ENCODE measurements at regions of chr13 and their contacts with region 1.

Region 1: DNA sequence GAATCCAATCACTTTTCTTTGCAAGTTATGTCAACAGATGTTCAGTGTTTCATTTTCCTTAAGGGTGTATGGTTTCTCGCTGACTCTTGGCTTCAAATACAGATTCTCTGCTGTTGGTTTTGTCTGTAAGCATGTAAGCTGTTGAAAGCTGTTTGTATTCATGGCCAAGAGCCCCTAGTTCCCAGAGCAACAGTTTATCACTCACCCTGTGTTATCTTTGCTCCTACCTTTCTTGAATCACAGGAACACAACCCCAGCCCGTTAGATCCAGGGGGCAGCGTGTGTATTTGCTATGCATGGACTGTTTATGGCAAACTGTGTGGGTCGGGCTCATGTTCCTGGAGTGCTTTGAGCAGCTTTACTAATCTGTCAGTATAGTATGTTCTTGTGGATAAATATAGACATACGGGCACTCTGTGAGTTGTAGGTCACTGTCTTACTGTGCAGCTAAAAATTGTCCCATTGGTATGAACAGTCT is 28.9 kb downstream of the FRY start:
- DNase-seq: peak in 3 of 5 donors; percentile 27 to 42 (median 36)
- ATAC-seq: peak; percentile 93 to 96 (median 94)
- H3K4me3 ChIP-seq: peak overlapping the region in 8 of 12 donors; percentile 5 to 51 (median 28)
- H3K27ac ChIP-seq: peak overlapping the region; percentile 35 to 82 (median 76)
- H3K4me1 ChIP-seq: peaks cover 0 to 55% (median 25%) of the 10 kb centered on the region in 12 donors
- H3K27me3 ChIP-seq: no peaks in the 10 kb centered on the region
- CTCF ChIP-seq: no peak
- POLR2A ChIP-seq: no peak

Region 2: DNA sequence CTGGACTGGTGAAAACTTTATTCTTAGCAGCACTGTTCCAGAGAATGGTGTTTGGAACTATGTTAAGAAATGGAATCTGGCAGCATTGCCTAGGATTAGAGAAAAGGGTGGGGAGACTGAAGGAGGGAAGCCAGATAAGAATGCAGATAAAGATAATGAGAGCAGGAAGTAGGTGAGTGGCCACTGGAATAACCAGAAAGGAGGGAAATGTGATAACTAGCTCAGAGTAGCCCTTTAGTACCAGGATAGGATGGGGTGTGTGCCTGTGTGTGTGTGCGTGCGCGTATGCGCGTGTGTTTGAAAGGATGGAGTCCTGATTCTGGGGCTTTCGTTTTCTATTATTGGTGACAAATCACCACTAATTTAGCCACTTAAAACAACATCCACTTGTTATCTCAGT is 62.3 kb before region 1 on chr13:
- intact Hi-C with region 1: no loop called
- DNase-seq: no peak
- ATAC-seq: peak; percentile 7 to 46 (median 24)
- H3K4me3 ChIP-seq: no peak overlapping the region
- H3K27ac ChIP-seq: peak overlapping the region in 3 of 12 donors; percentile 30 to 45 (median 32)
- H3K4me1 ChIP-seq: peaks cover 0 to 30% (median 14%) of the 10 kb centered on the region in 12 donors
- H3K27me3 ChIP-seq: no peaks in the 10 kb centered on the region
- CTCF ChIP-seq: no peak
- POLR2A ChIP-seq: no peak

Region 3: GRCh38 chr13:32079587-32079986 is 19.1 kb after region 1 on chr13:
- intact Hi-C with region 1: loop called in 1 of 10 experiments (anchors 2 kb)
- DNase-seq: no peak
- ATAC-seq: peak in 1 of 4 donors; percentile 35
- H3K4me3 ChIP-seq: no peak overlapping the region
- H3K27ac ChIP-seq: peak overlapping the region in 8 of 12 donors; percentile 8 to 61 (median 32)
- H3K4me1 ChIP-seq: peaks cover 3 to 78% (median 35%) of the 10 kb centered on the region in 12 donors
- H3K27me3 ChIP-seq: no peaks in the 10 kb centered on the region
- CTCF ChIP-seq: no peak
- POLR2A ChIP-seq: no peak

Region 4: GRCh38 chr13:32117701-32118100 is 57.3 kb after region 1 on chr13:
- intact Hi-C with region 1: loop called in 2 of 10 experiments (anchors 5 kb)
- DNase-seq: peak; percentile 62 to 89 (median 73)
- ATAC-seq: peak; percentile 97 to 99 (median 97)
- H3K4me3 ChIP-seq: no peak overlapping the region
- H3K27ac ChIP-seq: peak overlapping the region; percentile 33 to 85 (median 70)
- H3K4me1 ChIP-seq: peaks cover 0 to 64% (median 28%) of the 10 kb centered on the region in 12 donors
- H3K27me3 ChIP-seq: no peaks in the 10 kb centered on the region
- CTCF ChIP-seq: no peak
- POLR2A ChIP-seq: no peak

Region 5: DNA sequence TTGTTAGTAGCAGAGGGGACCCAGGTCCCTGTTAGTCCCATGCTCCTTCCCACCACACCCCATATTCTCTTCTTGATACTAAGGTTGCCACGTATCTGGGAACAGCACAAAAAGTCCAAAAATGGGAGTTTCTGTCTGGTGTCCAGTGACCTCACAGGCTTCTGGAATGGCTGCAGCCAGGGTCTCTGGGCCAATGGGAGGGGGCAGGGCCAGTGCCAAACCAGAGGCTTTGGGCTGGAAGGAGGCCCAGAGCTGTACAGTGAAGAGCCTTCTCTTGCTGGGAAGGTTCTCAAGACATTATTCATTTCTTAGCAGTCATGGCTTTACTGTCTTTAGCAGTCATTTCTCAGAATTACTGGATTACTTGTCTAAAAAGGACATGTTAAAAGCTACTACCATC is 90.4 kb after region 1 on chr13:
- intact Hi-C with region 1: loop called in 1 of 10 experiments (anchors 5 kb)
- DNase-seq: peak; percentile 74 to 83 (median 75)
- ATAC-seq: peak; percentile 86 to 94 (median 92)
- H3K4me3 ChIP-seq: no peak overlapping the region
- H3K27ac ChIP-seq: peak overlapping the region; percentile 58 to 90 (median 78)
- H3K4me1 ChIP-seq: peaks cover 0 to 47% (median 19%) of the 10 kb centered on the region in 12 donors
- H3K27me3 ChIP-seq: no peaks in the 10 kb centered on the region
- CTCF ChIP-seq: no peak
- POLR2A ChIP-seq: no peak

Region 6: DNA sequence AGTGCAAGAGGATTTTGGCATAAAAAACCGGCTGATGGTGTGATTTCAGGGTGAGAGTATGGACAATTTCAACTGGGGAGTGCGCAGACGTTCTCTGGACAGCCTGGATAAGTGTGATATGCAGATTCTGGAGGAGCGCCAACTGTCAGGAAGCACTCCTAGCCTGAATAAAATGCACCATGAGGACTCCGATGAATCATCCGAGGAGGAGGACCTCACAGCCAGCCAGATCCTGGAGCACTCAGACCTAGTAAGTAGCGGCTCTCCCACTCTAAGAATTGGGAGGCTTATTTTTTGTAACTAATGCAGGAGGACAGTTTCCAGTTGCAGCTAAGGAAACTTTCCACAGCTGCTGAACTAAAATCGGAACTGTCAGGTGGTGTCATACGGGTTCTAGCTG is 201.1 kb after region 1 on chr13:
- intact Hi-C with region 1: no loop called
- DNase-seq: peak; percentile 76 to 92 (median 89)
- ATAC-seq: peak; percentile 83 to 94 (median 92)
- H3K4me3 ChIP-seq: peak overlapping the region in 3 of 12 donors; percentile 6 to 23 (median 10)
- H3K27ac ChIP-seq: peak overlapping the region; percentile 62 to 84 (median 76)
- H3K4me1 ChIP-seq: peaks cover 9 to 89% (median 58%) of the 10 kb centered on the region in 12 donors
- H3K27me3 ChIP-seq: no peaks in the 10 kb centered on the region
- CTCF ChIP-seq: no peak
- POLR2A ChIP-seq: peak in 1 of 2 donors; percentile 38

Region 7: DNA sequence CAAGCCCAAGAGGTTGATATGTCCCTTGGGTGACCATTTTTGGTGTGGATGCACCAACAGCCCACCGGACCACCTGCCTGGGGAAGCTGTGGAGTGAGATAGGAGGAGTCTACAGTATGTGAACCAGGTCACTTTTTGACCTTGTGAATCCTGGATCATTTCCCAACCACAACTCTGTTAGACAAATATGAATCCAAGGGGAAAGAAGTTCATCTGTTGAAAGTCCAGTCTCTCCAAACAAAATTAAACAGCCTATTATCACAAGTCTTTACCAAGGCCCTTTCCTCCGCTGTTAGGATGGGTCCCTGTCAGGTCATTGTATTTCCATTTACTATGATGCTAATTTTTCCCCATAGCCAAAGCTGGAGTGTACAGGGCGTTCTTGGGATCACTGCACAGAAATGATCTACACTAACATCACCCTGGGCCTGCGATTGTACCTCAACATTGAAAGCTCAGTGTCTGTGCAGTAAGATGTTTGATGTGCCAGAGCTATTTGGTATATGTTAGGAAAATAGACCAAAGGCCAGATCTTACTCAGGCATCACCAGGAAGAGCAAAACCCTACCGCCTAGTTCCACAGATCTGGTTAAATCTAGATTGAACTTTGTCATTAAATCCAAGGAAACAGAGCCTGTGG is 1108.0 kb after region 1 on chr13:
- intact Hi-C with region 1: no loop called
- DNase-seq: no peak
- ATAC-seq: peak in 3 of 4 donors; percentile 27 to 32 (median 29)
- H3K4me3 ChIP-seq: no peak overlapping the region
- H3K27ac ChIP-seq: peak overlapping the region in 10 of 12 donors; percentile 13 to 57 (median 36)
- H3K4me1 ChIP-seq: peaks cover 0 to 64% (median 25%) of the 10 kb centered on the region in 12 donors
- H3K27me3 ChIP-seq: no peaks in the 10 kb centered on the region
- CTCF ChIP-seq: no peak
- POLR2A ChIP-seq: no peak

Measured in heart left ventricle (tissue), 16 donors.